IMR-90 (cell line): ENCODE measurements at regions of chr19 and their contacts with region 1.

Region 1: DNA sequence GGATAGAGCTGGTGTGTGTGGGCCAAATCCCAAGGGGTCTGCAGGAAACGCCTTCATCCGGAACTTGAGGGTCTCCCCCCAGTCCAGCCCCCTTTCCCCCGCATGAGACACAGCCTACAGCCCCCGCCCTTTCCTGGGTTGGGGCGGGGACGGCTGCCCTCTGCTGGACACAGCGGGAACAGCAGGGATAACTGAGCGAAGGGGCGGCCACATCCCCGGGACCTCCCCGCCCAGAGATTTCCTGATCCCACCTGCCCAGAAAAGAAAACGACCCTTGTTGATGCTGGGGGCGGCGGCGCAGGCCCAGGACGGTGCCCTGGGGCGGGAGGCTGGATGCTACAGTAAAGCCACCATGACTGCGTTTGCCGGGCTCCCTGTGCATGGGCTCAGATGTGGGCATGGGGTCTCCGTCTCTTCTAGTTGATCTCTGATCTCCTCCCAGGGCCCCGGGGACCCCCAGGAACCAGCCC is 14.2 kb downstream of the ONECUT3 start:
- DNase-seq: no peak
- ATAC-seq: peak; percentile 92
- H3K4me3 ChIP-seq: no peak overlapping the region
- H3K27ac ChIP-seq: no peak overlapping the region
- H3K4me1 ChIP-seq: no peaks in the 10 kb centered on the region
- H3K27me3 ChIP-seq: peaks cover 64% of the 10 kb centered on the region
- CTCF ChIP-seq: peak; percentile 84
- POLR2A ChIP-seq: no peak
- RAD21 ChIP-seq: peak; percentile 77

Region 2: DNA sequence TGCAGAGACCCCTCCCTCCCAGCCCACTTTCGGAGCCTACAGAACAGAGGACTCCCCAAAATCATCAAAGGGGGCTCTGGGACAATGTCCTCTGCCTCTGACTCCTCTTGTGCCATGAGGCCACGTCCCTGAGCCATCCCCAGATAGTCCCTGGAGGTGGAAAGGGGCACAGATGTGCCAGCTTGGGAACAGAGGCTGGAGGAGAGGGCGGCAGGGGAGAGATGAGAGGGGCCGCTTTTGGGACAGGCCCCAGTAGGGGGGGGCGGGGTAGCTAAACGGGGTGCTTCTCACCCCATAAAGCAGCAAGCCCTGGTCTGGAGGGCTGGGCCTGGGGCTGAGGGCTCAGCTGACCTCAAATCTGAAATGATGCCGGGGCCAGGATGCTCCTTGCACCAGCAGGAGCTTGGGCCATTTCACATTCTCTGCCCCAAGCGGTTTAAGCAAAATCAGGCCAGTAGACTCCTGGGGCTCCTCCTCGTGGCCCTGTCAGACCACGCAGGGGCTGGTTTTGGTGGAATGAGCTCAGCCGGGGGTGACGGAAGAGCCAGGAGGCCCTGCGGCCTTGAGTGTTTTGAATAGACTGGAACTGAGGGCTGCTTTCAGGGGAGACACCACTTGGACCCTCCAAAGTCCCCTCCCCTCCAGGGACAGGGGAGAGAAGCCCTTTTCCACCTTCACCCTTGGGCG is 12.9 kb after region 1 on chr19:
- CTCF ChIA-PET with region 1: interaction called, 3 read pairs
- POLR2A ChIA-PET with region 1: interaction called, 13 read pairs
- dilution Hi-C with region 1: no loop called
- in situ Hi-C with region 1: no loop called
- intact Hi-C with region 1: no loop called
- DNase-seq: peak; percentile 16
- ATAC-seq: 0 out of 2 replicates have a peak, but pooled peaks have one; percentile 40
- H3K4me3 ChIP-seq: no peak overlapping the region
- H3K27ac ChIP-seq: no peak overlapping the region
- H3K4me1 ChIP-seq: no peaks in the 10 kb centered on the region
- H3K27me3 ChIP-seq: peaks cover 63% of the 10 kb centered on the region
- CTCF ChIP-seq: peak; percentile 28; the same call in 1 of the 2 replicates
- POLR2A ChIP-seq: no peak
- RAD21 ChIP-seq: peak; percentile 24

Region 3: GRCh38 chr19:1848399-1849131 is 81.1 kb after region 1 on chr19 and contains the start of gene REXO1:
- CTCF ChIA-PET with region 1: no interaction called
- POLR2A ChIA-PET with region 1: no interaction called
- dilution Hi-C with region 1: no loop called
- in situ Hi-C with region 1: no loop called
- intact Hi-C with region 1: no loop called
- DNase-seq: peak; percentile 87
- ATAC-seq: peak; percentile 88
- H3K4me3 ChIP-seq: peak within 1 kb of the TSS; percentile 100
- H3K27ac ChIP-seq: peak within 1 kb of the TSS; percentile 99
- H3K4me1 ChIP-seq: peaks cover 12% of the 10 kb centered on the region
- H3K27me3 ChIP-seq: no peaks in the 10 kb centered on the region
- CTCF ChIP-seq: peak; percentile 87
- POLR2A ChIP-seq: peak; percentile 89
- RAD21 ChIP-seq: peak; percentile 28; the same call in 1 of the 2 replicates
- total RNA-seq, gene REXO1: 1.4 and 2.5 TPM in 2 replicates